Activated naive CD4-positive, alpha-beta T cell treated with anti-CD3 and anti-CD28 coated beads for 36 hours (primary cell): ENCODE measurements at regions of chr18 and their contacts with region 1.

Region 1: DNA sequence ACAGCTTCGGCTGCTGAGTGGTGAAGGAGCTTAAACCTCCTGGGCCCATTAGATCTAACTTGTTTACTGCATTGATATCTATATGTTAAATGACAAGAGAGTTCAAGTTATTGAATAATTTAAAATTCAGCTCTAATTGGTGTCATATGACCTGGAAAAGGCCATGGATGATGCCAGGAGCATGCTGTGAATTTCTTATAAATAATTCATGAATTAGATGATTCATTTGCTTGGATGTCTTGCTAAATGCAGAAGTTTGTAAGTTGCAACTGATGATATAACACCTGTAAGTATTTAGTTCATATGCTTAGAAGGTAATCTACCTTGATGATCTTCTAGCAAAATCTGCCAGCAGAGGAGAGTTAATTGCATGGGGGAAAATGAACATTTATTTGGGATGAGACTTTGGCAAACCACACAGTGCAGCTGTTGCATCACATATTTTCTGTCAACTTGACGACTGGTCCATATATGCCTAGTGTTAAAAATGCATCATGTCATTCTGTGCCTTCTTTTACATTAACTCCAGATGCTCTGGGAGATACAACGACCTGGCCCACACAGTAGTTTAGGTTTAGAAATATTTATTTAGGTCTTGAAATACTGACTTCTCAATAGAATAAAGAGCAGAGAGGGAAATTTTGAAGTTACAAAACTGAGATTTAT is 226.3 kb downstream of the KIAA1328 start:
- DNase-seq: no peak
- H3K4me3 Mint-ChIP-seq: no peak overlapping the region
- H3K27ac Mint-ChIP-seq: no peak overlapping the region
- H3K4me1 Mint-ChIP-seq: no peaks in the 10 kb centered on the region
- H3K27me3 Mint-ChIP-seq: no peaks in the 10 kb centered on the region

Region 2: GRCh38 chr18:37006742-37007141 is 48.5 kb before region 1 on chr18:
- CTCF ChIA-PET with region 1: no interaction called
- intact Hi-C with region 1: loop called (anchors 5 kb)
- DNase-seq: no peak
- H3K4me3 Mint-ChIP-seq: no peak overlapping the region
- H3K27ac Mint-ChIP-seq: no peak overlapping the region
- H3K4me1 Mint-ChIP-seq: peaks cover 2% of the 10 kb centered on the region
- H3K27me3 Mint-ChIP-seq: no peaks in the 10 kb centered on the region